Prostate gland (tissue), 2 donors: ENCODE measurements at regions of chr6 and their contacts with region 1.

Region 1: DNA sequence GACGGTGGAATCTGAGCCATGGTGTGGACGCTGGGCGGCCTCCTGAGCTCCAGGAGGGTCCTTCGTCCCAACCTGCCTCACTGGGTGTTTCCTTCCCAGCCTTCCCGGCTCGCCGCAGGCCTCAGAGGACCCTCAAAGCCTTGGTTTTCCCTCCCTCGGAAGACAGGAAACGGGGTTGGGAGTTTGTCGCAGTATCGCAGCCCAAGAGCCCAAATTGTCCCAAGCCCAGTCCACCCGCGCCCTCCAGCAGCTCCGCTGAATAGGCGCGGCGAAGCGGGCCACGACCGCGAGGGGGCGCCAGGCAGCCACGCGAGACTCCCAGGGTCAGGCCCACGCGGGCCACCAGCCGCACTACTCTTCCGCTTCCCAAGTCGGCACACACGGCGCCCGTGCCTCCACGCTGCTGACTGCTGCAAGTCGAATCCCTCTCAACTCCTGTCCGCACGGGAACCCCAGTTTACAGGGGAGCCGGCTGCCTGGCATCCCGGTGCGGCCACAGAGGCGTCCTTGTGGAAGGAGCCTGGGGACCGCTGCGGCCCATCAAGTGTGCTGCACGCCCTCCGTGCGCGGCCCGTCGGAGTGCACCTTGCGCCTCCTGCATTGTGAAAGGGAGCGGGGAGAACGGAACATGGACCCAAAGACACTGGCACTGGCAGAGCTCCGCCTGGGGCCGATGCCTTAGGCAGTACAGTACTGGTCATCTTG is 40.4 kb upstream of the HMGA1 start:
- DNase-seq: peak; percentile 79
- H3K4me3 ChIP-seq: peak overlapping the region; percentile 32 to 41
- H3K27ac ChIP-seq: no peak overlapping the region
- H3K4me1 ChIP-seq: no peaks in the 10 kb centered on the region
- H3K27me3 ChIP-seq: no peaks in the 10 kb centered on the region
- CTCF ChIP-seq: peak; percentile 91 to 98 (median 94)
- POLR2A ChIP-seq: peak; percentile 18

Region 2: GRCh38 chr6:34414999-34415858 is 219.0 kb after region 1 on chr6:
- intact Hi-C with region 1: loop called (anchors 1 kb)
- DNase-seq: peak; percentile 74
- H3K4me3 ChIP-seq: no peak overlapping the region
- H3K27ac ChIP-seq: peak overlapping the region; percentile 60 to 65
- H3K4me1 ChIP-seq: peaks cover 7% of the 10 kb centered on the region
- H3K27me3 ChIP-seq: no peaks in the 10 kb centered on the region
- CTCF ChIP-seq: peak; percentile 28 to 94 (median 75)
- POLR2A ChIP-seq: no peak